Right cardiac atrium (tissue), 5 donors: ENCODE measurements at regions of chr7 and their contacts with region 1.

Region 1: GRCh38 chr7:26500749-26501352 is 209.2 kb downstream of the SNX10 start:
- DNase-seq: no peak
- ATAC-seq: no peak
- H3K4me3 ChIP-seq: no peak overlapping the region
- H3K27ac ChIP-seq: no peak overlapping the region
- H3K4me1 ChIP-seq: no peaks in the 10 kb centered on the region
- H3K27me3 ChIP-seq: no peaks in the 10 kb centered on the region

Region 2: DNA sequence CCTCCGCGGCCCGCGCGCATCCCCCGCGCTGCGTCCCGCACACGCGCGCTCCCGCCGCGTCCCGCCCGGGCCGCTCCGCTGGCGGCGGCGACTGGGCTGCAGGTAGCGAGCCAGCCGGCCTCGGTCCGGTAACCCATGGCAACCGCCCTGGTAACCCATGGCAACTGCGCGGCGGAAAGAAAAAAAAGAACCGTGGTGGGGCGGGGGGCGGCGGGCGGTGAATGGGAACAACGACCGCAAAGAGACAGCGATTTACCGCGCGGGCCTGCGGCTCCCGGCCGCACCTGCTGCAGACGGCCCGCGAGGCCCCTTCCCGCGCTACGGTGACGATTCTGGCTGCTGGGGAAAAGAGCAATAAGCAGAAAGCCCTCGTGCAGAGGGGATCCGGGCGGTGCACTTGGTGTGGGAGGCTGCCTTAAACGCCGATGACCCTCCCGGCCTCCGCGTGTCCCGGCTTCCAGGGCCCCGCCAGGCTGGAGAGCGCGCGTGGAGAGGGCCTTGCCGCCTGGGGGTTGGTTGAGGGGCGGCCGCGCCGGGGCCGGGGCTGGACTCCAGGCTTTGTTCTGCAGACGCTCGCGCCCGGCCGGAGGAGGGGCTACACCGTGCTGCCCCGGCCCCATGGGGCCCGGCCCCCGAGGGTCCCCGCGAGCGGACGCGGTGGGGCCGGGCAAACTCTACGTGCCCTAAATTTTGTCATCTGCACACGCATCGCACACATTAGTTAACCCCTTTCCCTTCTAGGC is 124.5 kb before region 1 on chr7:
- intact Hi-C with region 1: loop called in 1 of 4 experiments (anchors 5 kb)
- DNase-seq: peak in 2 of 3 donors; percentile 53 to 65
- ATAC-seq: peak; percentile 68 to 80
- H3K4me3 ChIP-seq: peak overlapping the region; percentile 39
- H3K27ac ChIP-seq: no peak overlapping the region
- H3K4me1 ChIP-seq: no peaks in the 10 kb centered on the region
- H3K27me3 ChIP-seq: no peaks in the 10 kb centered on the region